Heart right ventricle (tissue), 16 donors: ENCODE measurements at regions of chr2 and their contacts with region 1.

Region 1: GRCh38 chr2:111958901-111959300 is 60.5 kb downstream of the MERTK start:
- DNase-seq: no peak
- ATAC-seq: no peak
- H3K4me3 ChIP-seq: no peak overlapping the region
- H3K27ac ChIP-seq: peak overlapping the region in 4 of 10 donors; percentile 53 to 72 (median 60)
- H3K4me1 ChIP-seq: peaks cover 0 to 50% (median 22%) of the 10 kb centered on the region in 9 donors
- H3K27me3 ChIP-seq: no peaks in the 10 kb centered on the region
- CTCF ChIP-seq: peak in 2 of 9 donors; percentile 15 to 29

Region 2: GRCh38 chr2:110969696-110970095 is 989.2 kb before region 1 on chr2:
- intact Hi-C with region 1: no loop called
- DNase-seq: no peak
- ATAC-seq: no peak
- H3K4me3 ChIP-seq: no peak overlapping the region
- H3K27ac ChIP-seq: no peak overlapping the region
- H3K4me1 ChIP-seq: peaks cover 0 to 9% (median 0%) of the 10 kb centered on the region in 9 donors
- H3K27me3 ChIP-seq: peaks cover 0 to under 1% (median 0%) of the 10 kb centered on the region in 7 donors
- CTCF ChIP-seq: no peak

Region 3: GRCh38 chr2:111905990-111906735 is 52.7 kb before region 1 on chr2:
- intact Hi-C with region 1: loop called in 4 of 10 experiments (anchors 5 to 10 kb)
- DNase-seq: no peak
- ATAC-seq: peak in 3 of 8 donors; percentile 40 to 47 (median 45)
- H3K4me3 ChIP-seq: peak overlapping the region in 1 of 10 donors; percentile 11
- H3K27ac ChIP-seq: peak overlapping the region; percentile 12 to 84 (median 68)
- H3K4me1 ChIP-seq: peaks cover 3 to 88% (median 70%) of the 10 kb centered on the region in 9 donors
- H3K27me3 ChIP-seq: no peaks in the 10 kb centered on the region
- CTCF ChIP-seq: no peak

Region 4: GRCh38 chr2:111938392-111938791 is 20.5 kb before region 1 on chr2:
- intact Hi-C with region 1: loop called in 1 of 10 experiments (anchors 2 kb)
- DNase-seq: no peak
- ATAC-seq: no peak
- H3K4me3 ChIP-seq: no peak overlapping the region
- H3K27ac ChIP-seq: no peak overlapping the region
- H3K4me1 ChIP-seq: no peaks in the 10 kb centered on the region
- H3K27me3 ChIP-seq: no peaks in the 10 kb centered on the region
- CTCF ChIP-seq: no peak

Region 5: GRCh38 chr2:112020561-112020960 is 61.7 kb after region 1 on chr2:
- intact Hi-C with region 1: no loop called
- DNase-seq: no peak
- ATAC-seq: no peak
- H3K4me3 ChIP-seq: no peak overlapping the region
- H3K27ac ChIP-seq: no peak overlapping the region
- H3K4me1 ChIP-seq: peaks cover 0 to 33% (median 0%) of the 10 kb centered on the region in 9 donors
- H3K27me3 ChIP-seq: no peaks in the 10 kb centered on the region
- CTCF ChIP-seq: no peak